Left cardiac atrium (tissue), 4 donors: ENCODE measurements at regions of chr16 and their contacts with region 1.

Region 1: DNA sequence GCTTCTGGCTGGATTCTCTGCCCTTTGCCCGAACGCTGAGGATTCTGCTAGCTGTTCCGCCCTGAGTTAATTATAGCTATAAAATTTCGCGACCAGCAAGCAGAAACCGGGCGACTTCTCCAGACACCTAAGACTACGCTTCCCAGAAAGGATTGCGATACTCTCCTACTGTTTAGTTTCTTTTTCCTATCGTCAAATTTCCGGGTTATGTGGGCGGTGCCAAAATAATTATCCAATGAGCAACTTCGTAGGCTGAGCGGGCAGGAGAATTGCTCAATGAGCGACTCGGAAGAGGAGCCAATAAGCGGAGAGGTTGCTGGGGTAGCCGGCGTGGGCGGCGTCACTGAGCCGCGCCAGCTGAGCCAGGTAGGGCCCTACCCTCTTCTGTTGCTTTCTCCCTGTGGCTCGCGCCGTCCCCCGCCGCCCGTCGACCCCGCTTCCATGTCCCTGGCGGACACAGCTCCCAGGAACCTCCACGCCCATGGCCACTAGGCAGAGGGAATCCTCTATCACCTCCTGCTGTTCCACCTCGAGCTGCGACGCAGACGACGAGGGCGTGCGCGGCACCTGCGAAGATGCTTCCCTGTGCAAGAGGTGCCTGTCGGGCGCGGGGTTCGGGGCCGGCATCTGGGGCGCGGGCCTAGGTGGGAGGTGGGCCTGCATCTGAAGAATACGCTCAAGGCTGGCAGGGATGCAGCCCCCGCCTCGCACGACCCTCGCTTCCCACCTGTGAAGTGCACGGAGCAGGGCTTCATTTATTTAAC is at the start of gene LCMT1:
- DNase-seq: peak; percentile 92
- ATAC-seq: peak; percentile 90 to 92
- total RNA-seq, gene LCMT1: 30.4 to 39.2 TPM

Region 2: DNA sequence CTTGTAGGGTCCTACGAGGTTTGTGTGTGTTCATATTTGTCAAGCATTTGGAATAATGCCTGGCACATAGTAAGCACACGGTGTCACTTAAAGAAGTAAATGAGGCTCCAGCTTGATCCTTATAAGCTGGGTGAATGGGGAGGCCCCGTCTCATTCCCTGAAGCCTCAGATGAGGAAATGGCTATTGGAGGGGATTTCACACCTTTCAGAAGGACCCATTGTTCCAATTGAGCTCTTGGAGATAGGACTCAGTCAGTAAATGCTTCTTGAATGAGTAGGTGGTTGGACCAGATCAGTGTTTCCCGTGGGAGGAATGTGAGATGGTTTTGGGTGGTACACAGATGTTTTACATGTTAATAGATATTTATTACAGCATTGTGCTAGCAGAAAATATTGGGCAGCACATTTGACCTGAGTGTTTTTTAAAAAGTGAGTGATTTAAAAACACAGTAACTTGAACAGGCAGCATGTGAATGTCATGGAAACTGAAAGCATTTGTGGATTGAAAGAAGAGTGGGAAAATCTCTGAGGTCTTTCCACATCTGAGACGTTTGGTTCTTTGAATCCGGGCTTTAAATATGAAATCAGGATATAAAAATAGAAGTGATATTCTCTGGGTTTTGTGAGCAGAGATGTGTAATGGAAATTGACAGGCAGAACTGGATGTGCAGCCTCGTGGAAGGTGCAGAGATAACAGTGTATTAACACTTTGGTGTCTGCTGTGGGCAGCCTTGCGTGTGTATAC is 60.0 kb before region 1 on chr16:
- intact Hi-C with region 1: loop called in 1 of 2 experiments (anchors 2 kb)
- DNase-seq: no peak
- ATAC-seq: peak; percentile 35

Region 3: DNA sequence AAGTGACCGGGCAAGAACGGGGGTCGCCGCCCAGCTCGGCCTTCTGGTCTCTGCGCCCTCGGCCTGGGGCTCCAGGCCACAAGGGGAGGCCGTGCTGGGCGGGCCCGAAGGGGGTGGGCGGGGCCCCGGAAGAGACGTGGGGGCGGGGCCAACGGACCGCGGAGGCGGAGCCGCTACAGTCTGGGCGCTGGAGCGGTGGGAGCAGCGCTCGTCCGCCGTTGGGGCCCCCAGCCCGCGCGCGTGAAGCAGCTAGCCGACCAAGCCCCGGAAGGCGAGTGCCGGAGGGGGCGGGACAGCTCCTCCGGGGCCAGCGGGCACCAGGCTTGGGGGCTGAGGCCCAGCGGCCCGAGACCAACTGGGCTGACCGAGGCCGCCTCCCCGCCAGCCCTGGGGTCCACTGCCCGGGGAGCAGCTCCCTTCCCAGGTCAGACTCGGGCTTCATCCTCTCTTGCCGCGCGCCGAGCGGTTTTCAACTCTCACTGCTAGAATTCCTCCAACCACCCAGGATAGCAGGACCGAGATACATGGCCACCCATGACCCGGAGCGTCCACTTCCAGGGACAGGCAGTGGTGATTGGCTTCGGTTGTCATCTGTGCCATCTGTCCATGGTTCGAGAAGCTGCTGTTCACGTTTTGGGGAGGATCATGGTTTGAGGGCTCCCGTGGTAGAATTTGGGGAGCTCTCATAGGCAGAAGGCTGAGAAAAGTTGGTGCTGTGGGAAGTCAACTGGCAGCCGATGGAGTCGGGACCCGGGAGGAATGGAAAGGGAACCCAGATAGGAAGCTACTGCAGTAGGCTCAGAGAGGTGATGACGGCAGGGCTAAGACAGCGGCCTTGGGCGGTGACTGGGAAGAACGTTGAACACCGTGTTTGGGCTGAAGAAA is 44.6 kb before region 1 on chr16:
- intact Hi-C with region 1: loop called in 1 of 2 experiments (anchors 2 kb)
- DNase-seq: peak; percentile 88
- ATAC-seq: peak; percentile 97 to 98